Esophagus squamous epithelium (tissue), 5 donors: ENCODE measurements at regions of chr17 and their contacts with region 1.

Region 1: DNA sequence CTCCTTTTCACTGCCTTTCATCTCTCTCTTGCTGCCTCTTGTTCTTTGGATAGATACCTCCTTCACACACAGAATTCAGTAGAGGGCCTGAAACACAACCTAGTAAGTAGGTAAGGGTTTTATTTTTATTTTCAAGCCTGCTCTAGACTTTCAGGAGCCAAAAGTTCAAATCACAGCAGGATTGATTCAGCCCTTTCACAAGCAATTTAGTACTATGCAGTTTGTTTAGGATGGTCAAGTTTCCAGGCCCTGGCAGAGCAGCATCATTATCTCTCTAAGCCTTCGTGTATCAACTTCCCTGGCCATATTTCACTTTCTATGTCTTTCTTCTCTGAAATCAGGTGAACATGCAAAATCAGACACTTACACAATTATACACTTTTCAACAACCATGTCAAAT is 148.8 kb upstream of the CORO6 start:
- DNase-seq: no peak
- H3K4me3 ChIP-seq: no peak overlapping the region
- H3K27ac ChIP-seq: no peak overlapping the region
- H3K4me1 ChIP-seq: no peaks in the 10 kb centered on the region
- H3K27me3 ChIP-seq: no peaks in the 10 kb centered on the region
- CTCF ChIP-seq: no peak
- POLR2A ChIP-seq: no peak

Region 2: DNA sequence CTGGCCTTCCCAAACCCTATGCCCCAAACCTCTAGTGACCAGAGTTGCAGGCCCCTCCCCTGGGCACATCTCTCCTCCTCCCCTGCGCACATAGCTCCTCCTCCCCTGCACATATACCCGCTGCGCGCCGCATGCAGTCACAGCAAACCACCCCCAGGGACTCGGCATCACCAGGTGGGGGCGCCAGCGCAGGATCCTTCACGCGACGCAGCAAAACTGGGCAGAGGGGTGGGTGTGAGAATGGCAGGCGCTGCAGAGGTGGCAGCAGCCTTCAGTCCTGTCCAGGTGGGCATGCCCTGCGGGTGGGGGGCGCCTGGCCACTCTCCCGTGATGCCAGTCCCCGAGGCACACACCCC is 154.4 kb before region 1 on chr17:
- intact Hi-C with region 1: loop called (anchors 10 kb)
- DNase-seq: peak; percentile 44
- H3K4me3 ChIP-seq: peak overlapping the region; percentile 33 to 65 (median 42)
- H3K27ac ChIP-seq: peak overlapping the region; percentile 63 to 75 (median 70)
- H3K4me1 ChIP-seq: peaks cover 48 to 93% (median 57%) of the 10 kb centered on the region in 3 donors
- H3K27me3 ChIP-seq: peaks cover 0 to 37% (median 0%) of the 10 kb centered on the region in 4 donors
- CTCF ChIP-seq: peak; percentile 58 to 85 (median 74)
- POLR2A ChIP-seq: peak in 1 of 4 donors; percentile 39

Region 3: DNA sequence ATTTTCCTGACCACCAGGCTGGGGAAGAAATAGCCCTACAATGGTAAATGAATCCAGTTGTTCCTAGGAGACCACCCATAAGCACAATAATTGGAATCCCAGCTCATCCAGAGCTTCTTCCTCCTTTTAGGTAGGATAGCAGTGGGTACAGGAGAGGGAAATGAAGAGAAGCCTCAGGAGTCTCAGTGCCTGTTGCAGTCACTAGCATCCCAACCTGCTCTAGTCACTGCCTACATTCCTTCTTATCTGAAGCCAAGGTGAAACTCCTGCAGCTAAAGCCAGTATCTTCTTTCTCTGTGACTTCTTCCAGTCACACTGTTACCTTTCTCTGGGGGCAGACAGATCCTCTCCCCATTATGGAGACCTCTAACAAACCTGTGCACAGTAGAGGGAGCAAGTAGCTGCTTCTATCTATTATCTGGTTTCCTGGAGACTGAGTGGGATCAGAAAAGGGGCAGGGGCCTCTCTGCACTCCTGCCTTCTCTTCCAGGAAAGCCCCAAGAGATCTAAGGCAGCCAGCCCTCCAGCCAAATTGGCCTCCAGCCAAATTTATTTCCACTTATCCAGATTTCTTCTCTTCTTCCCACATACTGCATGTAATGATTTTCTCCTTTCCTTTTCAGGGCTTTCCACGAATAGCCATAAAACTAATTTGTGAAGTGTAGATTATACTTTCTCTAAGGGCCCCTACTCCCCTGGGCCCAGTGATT is 72.9 kb after region 1 on chr17:
- intact Hi-C with region 1: no loop called
- DNase-seq: no peak
- H3K4me3 ChIP-seq: no peak overlapping the region
- H3K27ac ChIP-seq: no peak overlapping the region
- H3K4me1 ChIP-seq: peaks cover 0 to 9% (median 0%) of the 10 kb centered on the region in 3 donors
- H3K27me3 ChIP-seq: no peaks in the 10 kb centered on the region
- CTCF ChIP-seq: no peak
- POLR2A ChIP-seq: no peak